ENCODE measurements at regions of chr18 and their contacts with region 1.

Region 1: GRCh38 chr18:77207540-77207939 is 42.1 kb upstream of the GALR1 start:
- DNase-seq: no peak
- ATAC-seq: peak; percentile 82
- H3K4me3 ChIP-seq: peak overlapping the region in 1 of 2 experiments; percentile 29; a peak in 2 of 4 replicates
- H3K27ac ChIP-seq: peak overlapping the region; percentile 90
- H3K4me1 ChIP-seq: peaks cover 30% of the 10 kb centered on the region
- H3K27me3 ChIP-seq: no peaks in the 10 kb centered on the region
- CTCF ChIP-seq: no peak

Region 2: GRCh38 chr18:77000527-77000926 is 207.0 kb before region 1 on chr18:
- CTCF ChIA-PET with region 1: interaction called, 13 read pairs
- POLR2A ChIA-PET with region 1: no interaction called
- in situ Hi-C with region 1: no loop called
- intact Hi-C with region 1: loop called (anchors 2 kb)
- DNase-seq: peak; percentile 42
- ATAC-seq: peak; percentile 52
- H3K4me3 ChIP-seq: no peak overlapping the region
- H3K27ac ChIP-seq: no peak overlapping the region
- H3K4me1 ChIP-seq: peaks cover 8% of the 10 kb centered on the region; the same call in 1 of the 2 replicates
- H3K27me3 ChIP-seq: no peaks in the 10 kb centered on the region
- CTCF ChIP-seq: no peak

Region 3: DNA sequence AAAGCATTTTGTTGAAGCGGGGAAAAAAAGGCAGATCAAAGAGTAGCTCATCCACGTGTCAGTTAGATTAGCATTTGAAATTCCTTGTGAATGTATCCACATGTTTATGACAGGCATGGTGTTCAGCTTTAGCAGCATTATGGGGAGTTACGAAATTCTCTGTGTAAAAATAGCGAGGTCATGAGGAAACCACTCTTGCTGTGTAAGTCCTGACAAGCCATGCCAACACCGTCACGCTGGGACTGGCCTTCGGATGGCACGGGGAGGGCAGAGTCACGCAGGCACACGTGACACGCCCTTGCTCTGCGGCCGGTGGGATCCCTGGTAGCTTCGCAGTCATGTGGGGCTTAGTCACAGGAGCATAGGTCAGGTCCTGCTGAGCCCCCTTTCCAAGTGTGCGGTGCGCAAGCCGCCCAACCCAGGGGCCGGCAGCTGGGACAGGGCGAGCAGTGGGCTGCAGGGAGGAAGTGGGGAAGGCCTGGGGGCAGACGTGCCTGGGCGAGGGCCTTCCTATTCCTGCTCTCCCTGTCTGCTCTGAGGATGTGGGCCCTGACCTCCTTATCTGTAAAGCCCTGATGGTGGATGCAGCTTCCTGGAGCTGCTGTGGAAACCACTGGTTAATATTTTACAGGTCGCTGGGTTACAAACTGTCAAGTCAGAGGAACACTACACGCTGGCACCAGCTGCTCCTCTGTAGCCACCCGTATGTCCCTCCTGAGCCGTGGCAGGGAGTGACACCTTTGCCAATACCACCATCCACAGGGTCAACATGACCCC is 92.9 kb before region 1 on chr18:
- CTCF ChIA-PET with region 1: interaction called, 4 read pairs
- POLR2A ChIA-PET with region 1: no interaction called
- in situ Hi-C with region 1: no loop called
- intact Hi-C with region 1: loop called (anchors 5 kb)
- DNase-seq: no peak
- ATAC-seq: peak; percentile 65
- H3K4me3 ChIP-seq: peak overlapping the region in 1 of 2 experiments; percentile 6; a peak in 1 of 4 replicates
- H3K27ac ChIP-seq: peak overlapping the region; percentile 94
- H3K4me1 ChIP-seq: peaks cover 76% of the 10 kb centered on the region
- H3K27me3 ChIP-seq: no peaks in the 10 kb centered on the region
- CTCF ChIP-seq: no peak

Region 4: DNA sequence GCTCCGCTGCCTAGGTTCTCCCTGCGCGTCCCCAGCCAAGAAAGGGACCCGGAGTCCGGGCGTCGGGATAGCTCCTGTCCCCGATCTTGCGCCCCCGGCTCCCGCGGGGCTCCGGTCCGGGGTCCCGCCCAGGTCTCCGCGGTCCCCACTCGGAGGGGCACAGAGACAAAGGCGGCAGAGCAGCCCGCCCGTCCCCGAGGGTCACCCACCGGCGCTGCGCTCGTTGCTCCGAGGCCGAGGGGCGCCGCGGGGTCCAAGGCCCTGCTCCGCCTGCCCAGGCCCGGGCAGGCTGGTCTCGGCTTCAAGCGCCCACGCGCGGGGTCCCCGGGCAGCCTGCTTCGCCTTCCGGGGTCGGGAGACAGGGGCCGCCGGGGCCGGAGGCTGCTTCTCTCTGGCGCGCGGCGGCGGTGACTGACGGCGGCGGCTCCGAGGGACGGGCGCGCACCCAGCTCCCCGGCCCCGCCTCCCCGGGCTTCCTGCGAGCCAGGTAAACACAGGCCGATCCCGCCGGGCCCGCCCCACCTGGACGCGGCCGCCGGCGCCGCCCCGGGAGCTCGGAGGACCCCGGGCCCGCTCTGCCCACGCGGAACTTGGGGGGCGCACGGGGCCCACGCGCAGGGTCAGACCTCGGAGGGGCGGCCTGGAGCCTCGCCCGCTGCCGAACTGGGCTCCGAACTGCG is 75.0 kb before region 1 on chr18 and contains the start of gene MBP:
- CTCF ChIA-PET with region 1: interaction called, 9 read pairs
- POLR2A ChIA-PET with region 1: no interaction called
- in situ Hi-C with region 1: no loop called
- intact Hi-C with region 1: loop called (anchors 2 kb)
- DNase-seq: no peak
- ATAC-seq: peak; percentile 73
- H3K4me3 ChIP-seq: peak within 1 kb of the TSS; percentile 77 to 86
- H3K27ac ChIP-seq: peak within 1 kb of the TSS; percentile 97
- H3K4me1 ChIP-seq: peaks cover 44% of the 10 kb centered on the region
- H3K27me3 ChIP-seq: no peaks in the 10 kb centered on the region
- CTCF ChIP-seq: no peak
- total RNA-seq, gene MBP: 88.8 TPM